B cell (primary cell): ENCODE measurements at regions of chr17 and their contacts with region 1.

Region 1: GRCh38 chr17:79393358-79394202 is 217.3 kb downstream of the RBFOX3 start:
- DNase-seq: peak; percentile 83
- ATAC-seq: peak; percentile 83
- H3K4me3 ChIP-seq: no peak overlapping the region
- H3K4me3 Mint-ChIP-seq: no peak overlapping the region
- H3K27ac ChIP-seq: no peak overlapping the region
- H3K27ac Mint-ChIP-seq: peak overlapping the region; percentile 17
- H3K4me1 ChIP-seq: peaks cover 0 to under 1% of the 10 kb centered on the region in 2 donors
- H3K4me1 Mint-ChIP-seq: peaks cover 3% of the 10 kb centered on the region
- H3K27me3 ChIP-seq: peaks cover 0 to 53% (median 10%) of the 10 kb centered on the region in 4 experiments
- H3K27me3 Mint-ChIP-seq: peaks cover 57% of the 10 kb centered on the region
- CTCF ChIP-seq: peak; percentile 96

Region 2: DNA sequence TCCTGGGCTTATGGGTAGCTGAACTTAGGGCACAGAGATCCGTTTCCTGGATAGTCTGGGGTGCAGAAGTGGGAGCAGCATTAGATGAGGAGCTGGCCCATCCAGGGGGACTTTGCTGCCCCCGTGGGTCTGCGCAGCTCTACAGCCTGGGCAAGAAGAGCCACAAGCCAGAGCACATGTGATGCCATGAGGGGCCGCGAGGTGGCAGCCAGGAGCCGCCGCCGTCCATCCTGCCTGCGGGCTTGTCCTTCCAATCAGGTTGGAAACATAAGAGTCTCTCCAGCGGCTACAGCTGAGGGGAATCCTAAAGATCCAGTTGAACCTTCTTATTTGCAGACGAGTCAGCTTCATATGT is 347.8 kb before region 1 on chr17:
- CTCF ChIA-PET with region 1: interaction called, 24 read pairs
- POLR2A ChIA-PET with region 1: no interaction called
- intact Hi-C with region 1: loop called (anchors 1 kb)
- DNase-seq: peak; percentile 71
- ATAC-seq: peak; percentile 82
- H3K4me3 ChIP-seq: no peak overlapping the region
- H3K4me3 Mint-ChIP-seq: no peak overlapping the region
- H3K27ac ChIP-seq: no peak overlapping the region
- H3K27ac Mint-ChIP-seq: no peak overlapping the region
- H3K4me1 ChIP-seq: no peaks in the 10 kb centered on the region
- H3K4me1 Mint-ChIP-seq: peaks cover 1% of the 10 kb centered on the region
- H3K27me3 ChIP-seq: peaks cover 0 to 19% (median 0%) of the 10 kb centered on the region in 4 experiments
- H3K27me3 Mint-ChIP-seq: peaks cover 24% of the 10 kb centered on the region
- CTCF ChIP-seq: peak; percentile 88

Region 3: GRCh38 chr17:79087428-79088143 is 306.0 kb before region 1 on chr17:
- CTCF ChIA-PET with region 1: interaction called, 370 read pairs
- POLR2A ChIA-PET with region 1: interaction called, 3 read pairs
- intact Hi-C with region 1: no loop called
- DNase-seq: peak; percentile 80
- ATAC-seq: peak; percentile 86
- H3K4me3 ChIP-seq: no peak overlapping the region
- H3K4me3 Mint-ChIP-seq: no peak overlapping the region
- H3K27ac ChIP-seq: no peak overlapping the region
- H3K27ac Mint-ChIP-seq: no peak overlapping the region
- H3K4me1 ChIP-seq: no peaks in the 10 kb centered on the region
- H3K4me1 Mint-ChIP-seq: no peaks in the 10 kb centered on the region
- H3K27me3 ChIP-seq: no peaks in the 10 kb centered on the region
- H3K27me3 Mint-ChIP-seq: peaks cover 4% of the 10 kb centered on the region
- CTCF ChIP-seq: peak; percentile 92

Region 4: GRCh38 chr17:79188048-79188447 is 205.5 kb before region 1 on chr17:
- CTCF ChIA-PET with region 1: interaction called, 277 read pairs
- POLR2A ChIA-PET with region 1: no interaction called
- intact Hi-C with region 1: no loop called
- DNase-seq: peak; percentile 53
- ATAC-seq: peak; percentile 51
- H3K4me3 ChIP-seq: no peak overlapping the region
- H3K4me3 Mint-ChIP-seq: no peak overlapping the region
- H3K27ac ChIP-seq: no peak overlapping the region
- H3K27ac Mint-ChIP-seq: no peak overlapping the region
- H3K4me1 ChIP-seq: peaks cover 0 to 4% of the 10 kb centered on the region in 2 donors
- H3K4me1 Mint-ChIP-seq: peaks cover 3% of the 10 kb centered on the region
- H3K27me3 ChIP-seq: peaks cover 0 to 53% (median 6%) of the 10 kb centered on the region in 4 experiments
- H3K27me3 Mint-ChIP-seq: peaks cover 49% of the 10 kb centered on the region
- CTCF ChIP-seq: peak; percentile 71

Region 5: DNA sequence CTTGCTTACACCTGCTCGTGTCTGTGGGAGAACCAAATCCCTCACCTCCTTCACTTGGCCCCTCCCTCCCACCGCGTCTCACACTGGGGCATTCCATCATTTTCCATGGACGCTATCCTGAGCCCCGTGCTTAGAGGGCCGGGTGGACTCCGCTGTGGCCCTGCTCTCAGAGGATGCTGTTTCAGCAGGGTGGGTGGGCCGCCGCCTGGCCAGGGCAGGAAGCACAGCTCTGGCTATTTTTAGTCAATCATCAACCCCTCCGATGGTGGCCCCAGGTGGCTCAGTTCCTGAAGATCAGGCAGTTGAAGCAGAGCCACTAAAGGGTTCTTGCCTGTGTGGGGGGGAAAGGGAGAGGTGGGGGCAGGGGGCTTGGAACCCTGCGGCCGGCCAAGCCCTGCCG is 88.7 kb before region 1 on chr17:
- CTCF ChIA-PET with region 1: interaction called, 11 read pairs
- POLR2A ChIA-PET with region 1: no interaction called
- intact Hi-C with region 1: no loop called
- DNase-seq: no peak
- ATAC-seq: no peak
- H3K4me3 ChIP-seq: no peak overlapping the region
- H3K4me3 Mint-ChIP-seq: peak overlapping the region; percentile 41
- H3K27ac ChIP-seq: no peak overlapping the region
- H3K27ac Mint-ChIP-seq: peak overlapping the region; percentile 46
- H3K4me1 ChIP-seq: peaks cover 21 to 36% of the 10 kb centered on the region in 2 donors
- H3K4me1 Mint-ChIP-seq: peaks cover 21% of the 10 kb centered on the region
- H3K27me3 ChIP-seq: peaks cover 0 to 12% (median 2%) of the 10 kb centered on the region in 4 experiments
- H3K27me3 Mint-ChIP-seq: peaks cover 26% of the 10 kb centered on the region
- CTCF ChIP-seq: no peak

Region 6: DNA sequence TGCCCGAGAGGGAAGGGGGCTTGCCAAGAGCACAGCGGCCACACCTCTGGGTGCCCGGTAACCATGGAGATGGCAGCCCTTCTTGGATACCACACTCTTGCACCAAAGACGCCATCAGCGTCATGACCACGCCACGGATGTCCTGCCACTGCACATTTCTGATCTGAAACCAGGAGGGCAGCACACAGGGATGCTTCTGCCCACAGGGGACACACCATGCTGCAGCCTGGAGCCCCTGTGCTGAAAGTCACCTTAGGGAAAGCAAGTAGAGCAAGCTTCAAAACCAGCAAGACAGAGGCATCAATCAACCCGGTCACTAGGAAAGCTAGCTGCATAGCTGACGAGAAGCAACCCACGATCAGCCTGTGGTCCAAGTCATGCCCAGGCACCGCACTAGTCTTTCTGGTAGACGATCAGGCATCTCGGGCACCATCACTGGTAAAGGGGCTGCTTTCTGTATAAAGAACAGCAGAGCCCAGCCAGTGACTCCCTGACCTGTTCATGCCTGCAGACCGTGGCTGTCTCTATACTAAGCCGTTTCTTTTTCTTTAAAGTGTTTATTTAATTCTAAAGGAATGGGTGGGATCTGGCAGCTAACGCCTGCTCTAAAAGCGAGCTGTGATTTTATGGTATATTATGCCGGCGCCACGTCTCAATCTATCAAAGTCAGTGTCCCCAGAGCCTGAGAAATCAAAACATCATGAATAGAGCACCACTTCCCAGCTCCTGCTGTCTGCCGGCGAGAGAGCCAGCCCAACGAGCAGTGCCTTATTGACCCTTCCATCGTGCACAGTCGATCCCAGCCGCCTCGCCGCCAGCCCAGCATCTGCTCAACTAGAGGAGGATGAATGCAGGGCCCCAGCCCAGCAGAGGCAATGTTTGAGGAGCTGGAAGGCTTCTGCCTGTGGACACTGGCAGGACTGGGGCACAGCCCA is 27.5 kb before region 1 on chr17:
- CTCF ChIA-PET with region 1: interaction called, 10 read pairs
- POLR2A ChIA-PET with region 1: no interaction called
- intact Hi-C with region 1: no loop called
- DNase-seq: no peak
- ATAC-seq: no peak
- H3K4me3 ChIP-seq: no peak overlapping the region
- H3K4me3 Mint-ChIP-seq: no peak overlapping the region
- H3K27ac ChIP-seq: no peak overlapping the region
- H3K27ac Mint-ChIP-seq: no peak overlapping the region
- H3K4me1 ChIP-seq: no peaks in the 10 kb centered on the region
- H3K4me1 Mint-ChIP-seq: peaks cover 5% of the 10 kb centered on the region
- H3K27me3 ChIP-seq: peaks cover 0 to 5% (median 2%) of the 10 kb centered on the region in 4 experiments
- H3K27me3 Mint-ChIP-seq: peaks cover 38% of the 10 kb centered on the region
- CTCF ChIP-seq: no peak